AG04449 (cell line): ENCODE measurements at regions of chr15 and their contacts with region 1.

Region 1: DNA sequence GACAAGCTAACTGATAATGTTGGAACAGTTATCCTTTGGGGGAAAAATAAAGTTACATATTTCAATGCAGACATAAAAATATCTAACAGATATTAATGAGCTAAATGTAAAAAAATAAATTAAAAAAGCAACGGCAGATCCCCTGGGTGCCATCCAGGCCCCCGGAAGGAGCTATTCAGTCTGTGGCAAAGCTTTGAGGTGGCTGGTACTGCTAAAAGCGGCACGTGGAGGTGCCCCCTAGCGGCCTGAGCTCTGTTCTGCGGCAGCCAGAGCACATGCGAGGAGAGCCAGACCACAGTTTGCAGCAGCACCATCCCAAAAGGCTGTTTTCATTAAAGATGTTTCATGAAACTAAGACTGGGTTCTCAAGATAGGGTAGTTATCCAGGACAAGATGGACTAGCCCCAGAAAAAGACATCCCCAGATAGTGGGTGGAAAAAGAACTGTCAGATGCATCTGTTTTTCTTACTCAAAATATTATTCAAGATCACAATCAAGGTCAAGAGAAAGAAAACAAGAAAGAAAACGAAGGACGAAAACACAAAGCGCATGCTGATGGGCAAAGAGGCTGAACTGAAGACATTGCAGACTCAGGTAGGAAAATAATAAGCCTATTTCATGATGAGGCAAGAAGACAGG is 18.7 kb downstream of the AP3S2 start:
- DNase-seq: no peak
- H3K4me3 ChIP-seq: no peak overlapping the region
- CTCF ChIP-seq: peak; percentile 99

Region 2: GRCh38 chr15:89750560-89751542 is 124.2 kb before region 1 on chr15 and contains the start of gene MESP1:
- CTCF ChIA-PET with region 1: interaction called, 842 read pairs
- POLR2A ChIA-PET with region 1: no interaction called
- DNase-seq: no peak
- H3K4me3 ChIP-seq: peak within 1 kb of the TSS; percentile 61
- CTCF ChIP-seq: peak; percentile 88

Region 3: GRCh38 chr15:89812011-89812835 is 62.8 kb before region 1 on chr15:
- CTCF ChIA-PET with region 1: interaction called, 16 read pairs
- POLR2A ChIA-PET with region 1: interaction called, 8 read pairs
- DNase-seq: no peak
- H3K4me3 ChIP-seq: no peak overlapping the region
- CTCF ChIP-seq: no peak

Region 4: GRCh38 chr15:89845305-89845893 is 29.6 kb before region 1 on chr15:
- CTCF ChIA-PET with region 1: interaction called, 30 read pairs
- POLR2A ChIA-PET with region 1: no interaction called
- DNase-seq: peak; percentile 68
- H3K4me3 ChIP-seq: no peak overlapping the region
- CTCF ChIP-seq: no peak

Region 5: GRCh38 chr15:89888214-89888804 is 13.3 kb after region 1 on chr15:
- CTCF ChIA-PET with region 1: interaction called, 233 read pairs
- POLR2A ChIA-PET with region 1: no interaction called
- DNase-seq: peak; percentile 69
- H3K4me3 ChIP-seq: no peak overlapping the region
- CTCF ChIP-seq: peak; percentile 53

Region 6: GRCh38 chr15:90071208-90071807 is 196.3 kb after region 1 on chr15:
- CTCF ChIA-PET with region 1: interaction called, 10 read pairs
- POLR2A ChIA-PET with region 1: no interaction called
- DNase-seq: peak; percentile 21
- H3K4me3 ChIP-seq: no peak overlapping the region
- CTCF ChIP-seq: peak; percentile 80